ENCODE measurements at regions of chr16 and their contacts with region 1.

Region 1: GRCh38 chr16:4158143-4159093 is 42.2 kb upstream of the ADCY9 start:
- DNase-seq: no peak
- ATAC-seq: no peak
- H3K4me3 ChIP-seq: no peak overlapping the region
- H3K4me3 Mint-ChIP-seq: no peak overlapping the region
- H3K27ac ChIP-seq: no peak overlapping the region
- H3K27ac Mint-ChIP-seq: no peak overlapping the region
- H3K4me1 ChIP-seq: no peaks in the 10 kb centered on the region
- H3K4me1 Mint-ChIP-seq: peaks cover 0 to 7% (median 0%) of the 10 kb centered on the region in 3 donors
- H3K27me3 ChIP-seq: peaks cover 0 to 2% of the 10 kb centered on the region in 2 experiments
- H3K27me3 Mint-ChIP-seq: no peaks in the 10 kb centered on the region

Region 2: GRCh38 chr16:4217204-4218131 is 59.0 kb after region 1 on chr16:
- CTCF ChIA-PET with region 1: interaction called in 1 of 2 experiments, 13 read pairs
- POLR2A ChIA-PET with region 1: no interaction called
- DNase-seq: no peak
- ATAC-seq: no peak
- H3K4me3 ChIP-seq: no peak overlapping the region
- H3K4me3 Mint-ChIP-seq: no peak overlapping the region
- H3K27ac ChIP-seq: no peak overlapping the region
- H3K27ac Mint-ChIP-seq: no peak overlapping the region
- H3K4me1 ChIP-seq: no peaks in the 10 kb centered on the region
- H3K4me1 Mint-ChIP-seq: no peaks in the 10 kb centered on the region
- H3K27me3 ChIP-seq: peaks cover 0 to 21% of the 10 kb centered on the region in 2 experiments
- H3K27me3 Mint-ChIP-seq: peaks cover 0 to 8% of the 10 kb centered on the region in 2 donors